Activated CD4-positive, alpha-beta memory T cell treated with anti-CD3 and anti-CD28 coated beads for 36 hours (primary cell): ENCODE measurements at regions of chr3 and their contacts with region 1.

Region 1: DNA sequence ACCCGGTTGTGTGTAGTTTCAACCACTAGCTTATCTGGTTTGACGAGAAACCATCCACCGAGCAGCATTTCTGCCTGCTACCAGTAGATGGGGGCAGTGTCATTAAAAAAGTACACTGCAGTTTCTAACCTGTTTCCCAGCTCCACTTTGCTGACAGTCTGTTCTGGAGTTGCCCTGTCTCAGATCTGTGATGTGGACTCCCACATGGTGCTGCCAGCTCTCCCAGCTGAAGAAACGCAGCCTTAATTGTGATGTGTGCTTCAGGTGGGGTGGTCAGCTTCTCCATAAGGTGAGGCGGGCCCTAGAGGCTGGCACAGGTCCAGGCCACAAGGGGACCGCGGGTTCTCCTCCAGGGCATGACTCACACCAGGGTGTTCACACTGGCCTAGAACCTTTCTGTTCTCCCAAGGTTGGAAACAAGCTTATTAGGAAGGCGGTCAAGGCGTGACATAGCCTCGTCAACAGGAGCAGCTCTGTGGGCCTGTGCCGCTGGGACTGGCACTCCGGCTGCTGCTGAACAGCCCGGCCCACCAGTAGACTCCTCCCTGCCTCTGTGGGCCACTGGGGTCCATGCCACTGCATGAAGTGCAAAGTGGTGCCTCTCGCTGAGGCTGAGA is 2.9 kb upstream of the FAM43A start:
- DNase-seq: peak; percentile 77
- H3K4me3 Mint-ChIP-seq: no peak overlapping the region
- H3K27ac Mint-ChIP-seq: no peak overlapping the region
- H3K4me1 Mint-ChIP-seq: peaks cover 39% of the 10 kb centered on the region
- H3K27me3 Mint-ChIP-seq: peaks cover 24% of the 10 kb centered on the region

Region 2: DNA sequence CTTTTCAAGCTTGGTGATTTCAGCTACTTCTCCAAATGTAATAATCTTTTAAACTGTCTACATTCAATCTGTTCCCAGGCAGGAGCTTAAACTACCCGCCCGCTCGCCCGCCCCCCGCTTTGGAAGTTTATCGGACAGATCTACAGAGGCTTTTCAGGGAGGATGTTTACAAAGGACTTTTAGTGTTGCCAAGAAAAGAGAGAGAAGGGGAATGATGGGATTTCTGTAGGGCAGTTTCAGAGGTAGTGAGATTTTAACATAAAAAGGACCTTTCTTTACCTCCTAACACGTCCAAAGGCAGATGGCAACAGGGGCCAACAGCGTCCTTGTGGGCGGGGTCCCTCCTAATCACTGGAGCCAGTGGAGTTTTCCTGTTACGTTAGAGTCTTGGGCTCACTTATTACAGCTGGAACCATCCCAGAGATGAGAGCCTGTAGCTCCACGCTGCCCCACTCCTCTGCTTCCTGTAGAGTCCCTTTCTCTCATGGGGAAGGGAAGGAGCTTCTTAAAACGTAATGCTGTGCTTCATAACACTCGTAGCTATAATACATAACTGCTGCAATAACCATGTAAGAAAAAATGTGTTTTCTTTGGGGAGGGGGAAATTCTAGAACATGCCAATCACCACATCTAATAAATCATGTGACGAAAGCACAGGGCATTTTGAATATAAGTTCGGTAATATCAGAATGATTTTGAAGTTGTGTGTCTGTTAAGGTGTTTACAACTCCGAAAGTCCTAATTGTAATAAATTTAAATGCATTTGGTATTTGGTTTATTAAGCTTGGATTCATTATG is 515.9 kb before region 1 on chr3:
- CTCF ChIA-PET with region 1: no interaction called
- POLR2A ChIA-PET with region 1: no interaction called
- intact Hi-C with region 1: no loop called
- DNase-seq: no peak
- H3K4me3 Mint-ChIP-seq: no peak overlapping the region
- H3K27ac Mint-ChIP-seq: no peak overlapping the region
- H3K4me1 Mint-ChIP-seq: no peaks in the 10 kb centered on the region
- H3K27me3 Mint-ChIP-seq: peaks cover 29% of the 10 kb centered on the region

Region 3: GRCh38 chr3:194486540-194487288 is 196.1 kb before region 1 on chr3 and contains the start of gene ATP13A3:
- CTCF ChIA-PET with region 1: interaction called, 3 read pairs
- POLR2A ChIA-PET with region 1: no interaction called
- intact Hi-C with region 1: loop called (anchors 5 kb)
- DNase-seq: peak; percentile 92
- H3K4me3 Mint-ChIP-seq: peak within 1 kb of the TSS; percentile 92
- H3K27ac Mint-ChIP-seq: peak within 1 kb of the TSS; percentile 95
- H3K4me1 Mint-ChIP-seq: peaks cover 58% of the 10 kb centered on the region
- H3K27me3 Mint-ChIP-seq: no peaks in the 10 kb centered on the region
- total RNA-seq, gene ATP13A3: 136 to 145 TPM

Region 4: DNA sequence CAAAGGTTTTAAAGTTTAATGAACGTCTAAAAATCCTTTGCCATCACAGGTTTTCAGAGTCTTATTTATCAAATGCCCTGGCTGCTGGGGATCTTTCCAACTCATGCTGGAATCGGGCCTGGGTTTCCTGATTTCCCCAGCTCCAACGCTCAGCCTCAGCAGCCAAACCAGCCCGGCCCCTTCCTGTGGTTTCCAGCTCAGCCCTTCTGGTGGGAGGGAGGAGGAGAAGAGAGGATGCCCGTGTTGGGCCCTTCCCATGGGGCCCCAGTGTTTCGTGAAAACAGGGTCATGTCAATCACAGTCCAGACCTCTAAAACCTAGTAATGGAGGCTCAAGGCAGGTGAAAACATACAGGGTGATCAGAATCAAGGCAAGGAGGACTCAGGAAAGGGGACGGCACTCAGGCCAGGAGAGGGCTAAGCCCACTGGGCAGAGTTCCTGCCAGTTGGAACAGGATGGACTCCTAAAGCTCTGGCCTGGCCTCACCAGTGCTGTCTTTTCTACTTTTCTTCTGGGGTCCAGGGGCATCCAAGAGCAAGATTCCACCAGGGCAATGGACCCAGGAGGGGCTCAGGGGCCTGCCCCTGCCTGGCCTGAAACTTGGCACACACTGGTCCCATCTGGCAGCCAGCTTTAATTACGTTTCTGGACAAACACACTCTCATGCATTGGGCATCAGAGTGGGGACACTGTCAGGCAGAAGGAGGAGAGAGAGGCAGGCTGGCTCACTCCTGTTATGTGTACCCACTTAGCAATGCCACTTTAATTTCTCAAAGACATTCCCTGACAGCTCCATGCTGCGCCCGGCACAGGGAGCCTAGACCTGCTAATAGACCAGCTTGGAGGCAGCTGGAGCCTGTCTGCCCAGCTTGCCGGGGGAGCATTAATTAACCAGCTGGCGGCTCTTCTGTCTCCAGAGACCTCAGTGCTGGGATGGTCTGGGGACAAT is 197.5 kb after region 1 on chr3:
- CTCF ChIA-PET with region 1: no interaction called
- POLR2A ChIA-PET with region 1: no interaction called
- intact Hi-C with region 1: no loop called
- DNase-seq: no peak
- H3K4me3 Mint-ChIP-seq: no peak overlapping the region
- H3K27ac Mint-ChIP-seq: no peak overlapping the region
- H3K4me1 Mint-ChIP-seq: peaks cover 11% of the 10 kb centered on the region
- H3K27me3 Mint-ChIP-seq: peaks cover 2% of the 10 kb centered on the region

Region 5: GRCh38 chr3:194893121-194893987 is 210.6 kb after region 1 on chr3:
- CTCF ChIA-PET with region 1: no interaction called
- POLR2A ChIA-PET with region 1: no interaction called
- intact Hi-C with region 1: loop called (anchors 10 kb)
- DNase-seq: peak; percentile 20
- H3K4me3 Mint-ChIP-seq: no peak overlapping the region
- H3K27ac Mint-ChIP-seq: peak overlapping the region; percentile 11
- H3K4me1 Mint-ChIP-seq: peaks cover 13% of the 10 kb centered on the region
- H3K27me3 Mint-ChIP-seq: peaks cover 26% of the 10 kb centered on the region

Region 6: GRCh38 chr3:195182470-195182795 is 499.6 kb after region 1 on chr3:
- CTCF ChIA-PET with region 1: interaction called, 4 read pairs
- POLR2A ChIA-PET with region 1: no interaction called
- intact Hi-C with region 1: loop called (anchors 5 kb)
- DNase-seq: peak; percentile 53
- H3K4me3 Mint-ChIP-seq: peak overlapping the region; percentile 38
- H3K27ac Mint-ChIP-seq: peak overlapping the region; percentile 80
- H3K4me1 Mint-ChIP-seq: peaks cover 59% of the 10 kb centered on the region
- H3K27me3 Mint-ChIP-seq: no peaks in the 10 kb centered on the region

Region 7: GRCh38 chr3:195442573-195443390 is 760.0 kb after region 1 on chr3 and contains the start of gene ACAP2:
- CTCF ChIA-PET with region 1: no interaction called
- POLR2A ChIA-PET with region 1: no interaction called
- intact Hi-C with region 1: loop called (anchors 10 kb)
- DNase-seq: peak; percentile 99
- H3K4me3 Mint-ChIP-seq: peak within 1 kb of the TSS; percentile 92
- H3K27ac Mint-ChIP-seq: peak within 1 kb of the TSS; percentile 91
- H3K4me1 Mint-ChIP-seq: peaks cover 39% of the 10 kb centered on the region
- H3K27me3 Mint-ChIP-seq: no peaks in the 10 kb centered on the region
- total RNA-seq, gene ACAP2: 45.0 to 47.0 TPM

Region 8: GRCh38 chr3:195909644-195910508 is 1227.1 kb after region 1 on chr3:
- CTCF ChIA-PET with region 1: no interaction called
- POLR2A ChIA-PET with region 1: no interaction called
- intact Hi-C with region 1: loop called (anchors 5 kb)
- DNase-seq: peak; percentile 91
- H3K4me3 Mint-ChIP-seq: peak overlapping the region; percentile 66
- H3K27ac Mint-ChIP-seq: peak overlapping the region; percentile 54
- H3K4me1 Mint-ChIP-seq: peaks cover 28% of the 10 kb centered on the region
- H3K27me3 Mint-ChIP-seq: no peaks in the 10 kb centered on the region